ENCODE measurements at regions of chr1 and their contacts with region 1.

Region 1: DNA sequence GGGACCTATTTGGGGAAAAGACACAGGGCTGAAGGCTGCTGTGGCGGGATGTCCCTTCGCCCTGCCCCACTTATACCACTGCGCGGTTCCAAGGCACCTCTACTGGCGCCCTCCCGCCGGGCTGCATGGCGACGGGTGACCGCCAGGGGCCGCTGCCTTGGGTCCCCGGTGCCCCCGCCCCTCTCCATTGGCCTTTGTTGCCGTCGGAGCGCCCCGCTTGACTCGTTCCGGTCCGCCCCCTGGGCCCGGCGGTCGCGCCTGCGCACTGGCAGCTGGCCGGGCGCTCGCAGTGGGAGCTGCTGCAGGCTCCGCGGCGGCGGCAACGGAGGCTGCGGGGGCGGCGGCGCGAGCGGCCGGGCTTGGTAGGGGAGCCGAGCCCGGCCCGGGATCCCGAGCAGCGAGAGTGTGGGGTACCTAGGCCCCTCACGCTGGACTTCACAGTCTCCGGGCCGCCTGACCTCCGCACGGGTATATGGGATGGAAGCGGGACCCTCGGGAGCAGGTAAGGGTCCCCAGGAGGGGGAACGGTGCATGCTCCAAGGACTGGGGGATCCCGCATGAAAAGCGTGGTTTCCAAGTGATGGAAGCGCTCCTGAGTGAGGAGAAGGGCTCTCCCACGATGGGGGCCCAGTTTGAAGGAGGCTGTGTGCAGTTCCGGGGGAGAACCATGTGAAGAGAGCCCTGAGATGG is at the start of gene AGO1:
- DNase-seq: peak; percentile 96 to 98
- ATAC-seq: peak; percentile 97 to 99 (median 98)
- H3K4me3 ChIP-seq: peak within 1 kb of the TSS; percentile 98
- H3K27ac ChIP-seq: peak within 1 kb of the TSS; percentile 68
- H3K4me1 ChIP-seq: peaks cover 6% of the 10 kb centered on the region
- H3K27me3 ChIP-seq: no peaks in the 10 kb centered on the region
- CTCF ChIP-seq: peak; percentile 97
- total RNA-seq, gene AGO1: 9.8 to 16.3 (median 12.8) TPM

Region 2: GRCh38 chr1:35899941-35900340 is 16.9 kb after region 1 on chr1:
- intact Hi-C with region 1: no loop called
- DNase-seq: no peak
- ATAC-seq: no peak
- H3K4me3 ChIP-seq: no peak overlapping the region
- H3K27ac ChIP-seq: no peak overlapping the region
- H3K4me1 ChIP-seq: no peaks in the 10 kb centered on the region
- H3K27me3 ChIP-seq: no peaks in the 10 kb centered on the region
- CTCF ChIP-seq: no peak

Region 3: GRCh38 chr1:35929730-35930592 is 46.9 kb after region 1 on chr1:
- intact Hi-C with region 1: loop called (anchors 5 kb)
- DNase-seq: peak; percentile 41 to 72
- ATAC-seq: peak; percentile 18 to 62 (median 40)
- H3K4me3 ChIP-seq: peak overlapping the region; percentile 80
- H3K27ac ChIP-seq: peak overlapping the region; percentile 99
- H3K4me1 ChIP-seq: peaks cover 25% of the 10 kb centered on the region
- H3K27me3 ChIP-seq: no peaks in the 10 kb centered on the region
- CTCF ChIP-seq: no peak